Activated CD4-positive, alpha-beta T cell treated with anti-CD3 and anti-CD28 coated beads, Interleukin-2, amount 10 ng/mL, durations not matched to agents 24 days and 14 days (primary cell): ENCODE measurements at regions of chr16 and their contacts with region 1.

Region 1: DNA sequence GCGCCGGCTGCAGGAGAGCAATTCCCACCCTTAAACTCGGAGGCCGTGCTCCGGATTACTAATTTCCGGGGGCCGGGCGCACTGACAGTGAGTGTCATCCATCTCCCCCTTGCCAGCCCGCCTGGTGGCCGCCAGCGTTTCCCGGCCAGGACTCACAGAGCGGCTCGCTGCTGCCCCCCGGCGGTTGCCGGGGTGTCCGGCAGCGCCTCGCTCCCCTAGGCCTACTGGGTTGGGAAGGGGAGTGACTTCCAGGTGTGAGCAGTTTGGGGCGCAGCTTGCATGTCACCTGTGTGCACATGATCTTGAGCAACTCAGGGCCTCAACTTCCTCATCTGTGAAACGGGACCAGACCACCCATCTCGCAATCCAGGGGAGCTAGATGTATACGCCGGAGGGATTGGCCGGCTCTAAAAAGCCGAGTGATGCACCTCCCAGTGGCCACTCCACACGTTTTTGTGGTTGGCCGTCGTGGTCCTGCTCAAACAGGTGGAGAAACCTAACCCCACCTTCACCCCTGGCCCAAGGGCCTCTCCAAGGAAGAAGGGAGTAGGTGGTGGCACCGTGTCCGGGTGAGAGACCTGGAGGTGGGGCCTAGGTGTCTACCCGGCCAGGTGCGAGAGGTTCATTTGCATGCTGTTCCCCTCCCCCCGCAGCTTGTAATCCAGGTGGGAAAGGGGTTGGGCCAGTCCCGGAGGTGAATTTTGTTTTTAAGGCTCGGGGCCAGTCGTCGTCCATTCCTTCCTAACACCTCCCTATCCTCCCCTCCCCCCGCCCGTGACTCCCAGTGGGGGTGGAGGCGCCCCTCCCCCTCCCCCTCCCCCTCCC is 2.4 kb upstream of the GSE1 start:
- DNase-seq: peak; percentile 95
- H3K4me3 Mint-ChIP-seq: peak overlapping the region; percentile 78
- H3K27ac Mint-ChIP-seq: peak overlapping the region; percentile 66
- H3K4me1 Mint-ChIP-seq: peaks cover 23% of the 10 kb centered on the region
- H3K27me3 Mint-ChIP-seq: peaks cover 1% of the 10 kb centered on the region

Region 2: DNA sequence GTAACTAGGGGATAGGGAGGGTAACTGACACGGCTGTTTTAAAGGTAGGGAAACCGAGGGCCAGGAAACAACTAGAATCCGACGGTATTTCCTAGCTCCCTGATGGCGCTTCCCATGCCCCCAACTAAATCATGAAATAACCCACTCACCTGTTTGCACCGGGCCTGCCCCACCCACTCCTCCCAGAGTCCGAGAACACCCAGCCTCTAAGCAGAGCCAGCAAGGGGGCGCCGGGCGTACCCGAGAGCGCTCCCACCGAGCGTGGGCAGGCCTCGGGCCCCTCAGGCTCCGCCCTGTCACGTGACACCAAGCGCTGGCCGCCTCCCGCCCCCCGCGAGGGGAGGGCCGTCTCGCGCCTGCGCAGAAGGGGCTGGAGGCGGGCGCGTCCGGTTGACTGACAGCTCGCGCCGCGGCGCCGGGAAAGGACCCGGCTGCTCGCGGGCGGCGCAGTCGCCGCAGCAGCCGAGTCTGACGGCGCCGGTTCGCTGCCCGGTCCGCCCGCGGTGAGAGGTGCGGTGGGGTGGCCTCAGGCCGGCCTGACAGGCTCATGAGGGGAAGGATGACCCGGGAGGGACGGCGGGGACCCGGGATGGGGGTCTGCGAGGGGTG is 583.3 kb before region 1 on chr16 and contains the start of gene KIAA0513:
- intact Hi-C with region 1: loop called (anchors 5 kb)
- DNase-seq: peak; percentile 99
- H3K4me3 Mint-ChIP-seq: peak within 1 kb of the TSS; percentile 89
- H3K27ac Mint-ChIP-seq: peak within 1 kb of the TSS; percentile 93
- H3K4me1 Mint-ChIP-seq: peaks cover 36% of the 10 kb centered on the region
- H3K27me3 Mint-ChIP-seq: peaks cover 1% of the 10 kb centered on the region
- total RNA-seq, gene KIAA0513: 10.6 and 12.1 TPM in 2 replicates

Region 3: DNA sequence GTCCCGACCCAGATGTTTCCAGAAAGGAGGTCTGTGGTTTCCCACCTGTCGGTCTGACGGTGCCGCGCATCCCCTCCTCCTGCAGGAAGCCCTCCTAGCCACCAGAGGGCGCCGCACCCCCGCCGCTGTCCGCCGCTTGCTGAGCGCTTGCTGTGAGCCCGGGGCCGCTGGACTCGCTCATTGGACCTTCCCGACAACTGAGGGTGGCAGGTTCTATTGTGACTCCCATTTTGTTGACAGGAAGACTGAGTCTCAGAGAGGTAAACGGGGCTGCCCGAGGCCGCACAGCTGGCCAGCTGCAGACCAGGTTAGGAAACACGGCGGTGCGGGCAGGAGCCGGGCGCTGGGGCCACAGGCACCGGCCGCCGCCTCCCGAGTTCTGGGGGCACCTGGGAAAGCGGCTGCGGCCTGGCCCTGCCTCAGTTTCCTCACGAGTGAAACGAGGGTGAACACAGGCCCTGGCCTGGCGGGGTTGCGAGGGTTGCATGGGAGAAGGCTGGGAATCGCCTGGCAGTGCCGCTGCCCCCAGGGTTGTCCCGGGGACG is 307.3 kb before region 1 on chr16:
- intact Hi-C with region 1: loop called (anchors 2 kb)
- DNase-seq: peak; percentile 95
- H3K4me3 Mint-ChIP-seq: peak overlapping the region; percentile 86
- H3K27ac Mint-ChIP-seq: peak overlapping the region; percentile 77
- H3K4me1 Mint-ChIP-seq: peaks cover 33% of the 10 kb centered on the region
- H3K27me3 Mint-ChIP-seq: peaks cover 2% of the 10 kb centered on the region

Region 4: DNA sequence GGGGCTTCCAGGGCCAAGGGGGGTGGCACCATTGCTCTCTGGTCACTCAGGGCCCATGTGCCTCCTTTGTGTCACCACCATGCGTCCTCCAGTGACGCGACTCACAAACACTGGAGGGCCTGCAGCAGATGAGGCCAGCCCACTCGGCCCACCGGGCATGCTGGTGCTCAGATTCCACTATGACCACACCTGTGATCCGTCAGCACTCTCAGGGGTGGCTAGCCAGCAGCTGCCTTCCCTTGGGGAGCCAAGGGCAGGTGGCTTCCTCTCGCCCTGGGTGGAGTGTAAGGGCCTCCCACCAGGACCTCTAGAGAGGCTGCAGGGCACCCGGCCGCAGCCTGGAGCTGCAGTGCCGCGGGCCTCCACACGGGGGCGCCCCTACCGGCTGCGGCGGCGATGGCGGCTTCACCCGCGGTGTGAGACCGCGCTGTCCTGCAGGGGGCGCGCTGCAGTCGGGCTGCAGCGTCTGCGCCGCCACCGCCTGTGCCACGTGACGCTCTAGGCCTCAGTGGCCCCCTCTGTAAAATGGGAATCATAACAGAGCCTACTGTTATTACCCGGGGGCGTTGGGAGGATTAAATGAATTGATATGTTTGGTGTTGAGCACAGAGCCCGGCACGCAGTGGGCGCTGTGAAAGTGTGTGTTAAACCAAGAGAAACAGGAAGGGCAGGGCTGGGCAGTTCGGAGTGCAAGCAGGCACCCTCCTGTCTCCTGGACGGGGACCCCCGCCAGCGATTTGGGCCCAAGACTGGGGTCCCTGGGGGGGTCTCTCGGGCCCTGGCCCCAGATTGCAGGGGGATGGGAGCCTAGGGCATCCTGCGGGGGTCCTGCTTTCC is 190.0 kb before region 1 on chr16:
- intact Hi-C with region 1: loop called (anchors 1 kb)
- DNase-seq: peak; percentile 94
- H3K4me3 Mint-ChIP-seq: no peak overlapping the region
- H3K27ac Mint-ChIP-seq: peak overlapping the region; percentile 43
- H3K4me1 Mint-ChIP-seq: peaks cover 2% of the 10 kb centered on the region
- H3K27me3 Mint-ChIP-seq: peaks cover 4% of the 10 kb centered on the region

Region 5: DNA sequence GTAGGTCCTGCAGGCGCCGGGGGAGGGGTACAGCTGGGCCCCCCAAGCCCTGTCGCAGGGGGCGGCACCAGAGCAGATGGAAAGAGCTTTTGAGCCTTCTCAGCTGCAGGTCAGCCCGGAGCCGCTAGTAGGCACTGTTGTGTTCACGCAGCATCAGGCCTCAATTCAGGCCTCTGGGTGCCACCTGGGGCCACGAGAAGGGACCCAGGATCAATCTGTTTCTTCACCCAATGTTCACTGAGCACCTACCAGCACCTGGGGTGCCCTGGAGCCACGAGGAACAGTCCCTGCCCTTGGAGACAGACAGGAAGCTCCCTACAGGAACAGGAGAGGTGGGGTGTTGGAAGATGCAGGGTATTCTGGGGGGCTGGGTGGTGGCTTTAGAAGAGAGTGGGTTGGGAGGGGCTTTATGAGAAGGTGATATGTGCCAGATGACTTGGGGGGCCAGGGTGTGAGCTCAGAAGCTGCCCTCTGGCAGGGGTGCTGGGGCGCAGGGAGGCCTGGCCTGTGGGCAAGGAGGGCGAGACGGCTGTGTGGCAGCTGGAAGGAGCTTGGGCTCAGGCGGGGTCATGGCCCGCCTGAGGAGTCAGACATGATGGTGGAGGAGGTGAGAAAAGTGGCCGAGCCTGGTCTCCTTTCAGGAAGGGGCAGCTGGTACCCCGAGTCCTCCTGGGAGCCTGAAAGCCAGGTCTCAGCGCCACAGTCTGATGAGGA is 119.5 kb before region 1 on chr16:
- intact Hi-C with region 1: loop called (anchors 2 kb)
- DNase-seq: peak; percentile 78
- H3K4me3 Mint-ChIP-seq: no peak overlapping the region
- H3K27ac Mint-ChIP-seq: no peak overlapping the region
- H3K4me1 Mint-ChIP-seq: no peaks in the 10 kb centered on the region
- H3K27me3 Mint-ChIP-seq: peaks cover 2% of the 10 kb centered on the region

Region 6: DNA sequence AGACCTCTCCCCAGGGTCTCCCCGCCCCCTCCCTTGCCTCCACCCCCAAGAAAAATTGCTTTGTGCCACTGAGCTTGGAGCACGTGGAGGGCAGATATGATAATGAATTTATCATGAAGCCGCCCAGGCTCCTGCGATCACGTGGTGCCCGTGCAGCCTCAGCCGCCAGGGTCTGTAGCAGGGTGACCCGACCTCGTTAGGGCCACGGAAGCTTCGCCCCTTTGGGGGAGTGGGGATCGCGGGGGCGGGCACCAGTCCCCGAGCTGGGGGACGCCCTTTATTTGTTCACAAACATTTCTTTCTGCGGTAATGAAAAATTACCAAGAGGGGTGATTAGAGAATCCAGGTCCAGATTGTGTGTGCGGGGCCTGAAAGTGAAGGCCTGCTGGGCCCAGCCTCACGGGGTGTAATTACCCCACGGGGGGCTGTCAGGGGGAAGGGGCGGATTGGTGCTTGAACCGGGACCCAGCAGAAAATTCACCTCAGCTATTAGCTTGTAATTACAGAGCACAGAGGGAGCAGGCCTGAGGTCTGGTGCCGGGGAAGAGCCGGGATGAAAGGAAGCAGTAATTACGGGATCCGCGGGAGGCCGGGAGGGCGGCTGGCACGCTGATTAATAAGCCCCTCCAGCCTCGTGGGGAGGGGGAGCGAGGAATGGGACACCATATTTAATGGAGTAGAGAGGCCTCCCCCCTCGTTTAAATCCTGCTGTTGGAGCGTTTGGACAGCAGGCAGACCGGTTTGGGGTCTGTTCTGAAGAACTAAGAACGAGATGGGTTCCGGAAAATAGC is 15.7 kb after region 1 on chr16:
- intact Hi-C with region 1: no loop called
- DNase-seq: no peak
- H3K4me3 Mint-ChIP-seq: no peak overlapping the region
- H3K27ac Mint-ChIP-seq: no peak overlapping the region
- H3K4me1 Mint-ChIP-seq: peaks cover 2% of the 10 kb centered on the region
- H3K27me3 Mint-ChIP-seq: no peaks in the 10 kb centered on the region

Region 7: GRCh38 chr16:85688586-85689284 is 78.0 kb after region 1 on chr16 and contains the start of gene GINS2:
- intact Hi-C with region 1: loop called (anchors 2 kb)
- DNase-seq: peak; percentile 97
- H3K4me3 Mint-ChIP-seq: peak within 1 kb of the TSS; percentile 84
- H3K27ac Mint-ChIP-seq: peak within 1 kb of the TSS; percentile 78
- H3K4me1 Mint-ChIP-seq: peaks cover 17% of the 10 kb centered on the region
- H3K27me3 Mint-ChIP-seq: peaks cover 5% of the 10 kb centered on the region
- total RNA-seq, gene GINS2: 87.4 and 93.0 TPM in 2 replicates